Endothelial cell of umbilical vein (primary cell): ENCODE measurements at regions of chr2 and their contacts with region 1.

Region 1: GRCh38 chr2:168246483-168247340 is 683 bp downstream of the STK39 start:
- DNase-seq: peak; percentile 53
- H3K4me3 ChIP-seq: peak overlapping the region; percentile 68 to 83 (median 74)
- H3K27ac ChIP-seq: peak overlapping the region; percentile 76
- H3K4me1 ChIP-seq: peaks cover 21% of the 10 kb centered on the region
- H3K27me3 ChIP-seq: peaks cover 0 to 2% of the 10 kb centered on the region in 2 experiments
- CTCF ChIP-seq: peak in 1 of 2 donors; percentile 35
- POLR2A ChIP-seq: peak; percentile 40

Region 2: DNA sequence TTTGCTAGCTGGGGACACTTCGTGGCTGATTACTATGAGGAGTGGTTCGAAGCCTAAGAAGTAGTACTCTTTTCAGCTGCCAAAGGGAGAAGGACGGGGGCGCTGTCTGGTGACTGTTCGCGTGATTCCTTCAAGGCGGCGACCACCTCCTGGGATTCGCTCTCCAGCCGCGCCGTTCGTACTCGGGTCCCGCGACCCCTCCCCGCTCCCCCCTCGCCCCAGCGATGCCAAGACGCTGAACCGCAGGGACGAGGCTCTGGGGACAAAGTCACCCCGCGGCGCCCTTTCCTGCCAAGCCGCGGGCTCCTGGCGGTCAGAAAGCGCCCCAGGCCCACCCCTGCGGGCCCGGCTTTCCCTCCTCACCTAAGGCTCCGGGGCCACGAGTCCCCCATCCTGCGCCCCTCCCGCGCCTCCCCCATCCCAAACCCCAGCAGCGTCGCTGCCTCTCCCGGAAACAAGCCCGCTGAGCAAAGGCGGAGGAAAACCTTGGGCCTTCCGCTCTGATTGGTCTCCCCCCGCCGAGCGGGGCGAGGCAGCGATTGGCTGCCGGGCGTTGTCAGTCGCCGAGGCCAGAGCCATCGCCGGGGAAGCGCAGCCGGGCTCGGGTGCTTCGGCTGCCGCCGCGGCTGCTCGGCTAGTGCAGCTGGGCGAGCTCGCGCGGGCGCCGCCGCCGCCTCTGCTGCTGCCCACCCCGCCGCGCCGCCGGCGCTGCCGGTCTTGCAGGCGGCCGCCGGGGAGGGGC is 954.1 kb before region 1 on chr2:
- CTCF ChIA-PET with region 1: no interaction called
- POLR2A ChIA-PET with region 1: no interaction called
- dilution Hi-C with region 1: no loop called
- intact Hi-C with region 1: loop called (anchors 5 kb)
- DNase-seq: peak; percentile 87
- H3K4me3 ChIP-seq: peak within 1 kb of the TSS; percentile 50 to 82 (median 69)
- H3K27ac ChIP-seq: no peak within 1 kb of the TSS
- H3K4me1 ChIP-seq: peaks cover 19% of the 10 kb centered on the region
- H3K27me3 ChIP-seq: peaks cover 8 to 38% of the 10 kb centered on the region in 2 experiments
- CTCF ChIP-seq: peak in 1 of 2 donors; percentile 51
- POLR2A ChIP-seq: no peak

Region 3: GRCh38 chr2:168160897-168161296 is 85.8 kb before region 1 on chr2:
- CTCF ChIA-PET with region 1: interaction called, 4 read pairs
- POLR2A ChIA-PET with region 1: no interaction called
- dilution Hi-C with region 1: no loop called
- intact Hi-C with region 1: loop called (anchors 2 kb)
- DNase-seq: no peak
- H3K4me3 ChIP-seq: no peak overlapping the region
- H3K27ac ChIP-seq: no peak overlapping the region
- H3K4me1 ChIP-seq: peaks cover 10% of the 10 kb centered on the region
- H3K27me3 ChIP-seq: no peaks in the 10 kb centered on the region
- CTCF ChIP-seq: peak in 1 of 2 donors; percentile 6
- POLR2A ChIP-seq: no peak

Region 4: GRCh38 chr2:168192839-168193616 is 53.7 kb before region 1 on chr2:
- CTCF ChIA-PET with region 1: interaction called, 3 read pairs
- POLR2A ChIA-PET with region 1: no interaction called
- dilution Hi-C with region 1: no loop called
- intact Hi-C with region 1: loop called (anchors 1 kb)
- DNase-seq: peak; percentile 34
- H3K4me3 ChIP-seq: no peak overlapping the region
- H3K27ac ChIP-seq: no peak overlapping the region
- H3K4me1 ChIP-seq: peaks cover 25% of the 10 kb centered on the region
- H3K27me3 ChIP-seq: no peaks in the 10 kb centered on the region
- CTCF ChIP-seq: no peak
- POLR2A ChIP-seq: no peak

Region 5: GRCh38 chr2:168220965-168221819 is 25.5 kb before region 1 on chr2:
- CTCF ChIA-PET with region 1: no interaction called
- POLR2A ChIA-PET with region 1: no interaction called
- dilution Hi-C with region 1: no loop called
- intact Hi-C with region 1: loop called (anchors 2 kb)
- DNase-seq: peak; percentile 81
- H3K4me3 ChIP-seq: no peak overlapping the region
- H3K27ac ChIP-seq: peak overlapping the region; percentile 56
- H3K4me1 ChIP-seq: peaks cover 19% of the 10 kb centered on the region
- H3K27me3 ChIP-seq: no peaks in the 10 kb centered on the region
- CTCF ChIP-seq: no peak
- POLR2A ChIP-seq: no peak

Region 6: DNA sequence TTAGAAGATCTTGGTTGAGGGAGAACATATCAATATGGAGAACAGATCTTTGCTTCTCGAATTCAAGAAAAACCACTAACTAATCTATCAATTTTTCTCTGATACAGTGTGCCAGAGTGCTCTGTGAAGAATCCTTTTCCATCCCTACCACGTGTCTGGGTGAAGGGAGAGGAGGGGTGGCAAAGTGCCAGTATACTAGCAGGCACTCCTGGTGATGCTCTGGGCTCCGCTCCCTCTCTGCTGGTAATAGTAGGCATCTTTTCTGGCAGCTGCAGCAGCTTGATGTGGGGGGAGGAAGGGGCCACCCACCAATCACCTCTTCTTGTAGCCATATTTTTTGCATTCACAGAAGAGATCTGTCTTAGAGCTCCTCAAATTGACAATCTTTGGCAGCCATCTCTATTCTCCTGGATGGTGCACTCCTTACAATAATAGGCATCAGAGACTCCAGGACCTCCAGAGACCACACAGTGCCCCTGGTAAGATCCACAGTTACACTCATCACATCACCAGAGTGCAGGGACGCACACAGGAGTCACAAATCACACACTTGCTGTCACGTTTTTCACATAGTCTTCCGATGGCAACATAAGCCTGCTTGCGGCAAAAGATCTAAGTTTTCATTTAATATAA is 15.0 kb before region 1 on chr2:
- CTCF ChIA-PET with region 1: no interaction called
- POLR2A ChIA-PET with region 1: no interaction called
- dilution Hi-C with region 1: no loop called
- intact Hi-C with region 1: no loop called
- DNase-seq: no peak
- H3K4me3 ChIP-seq: no peak overlapping the region
- H3K27ac ChIP-seq: no peak overlapping the region
- H3K4me1 ChIP-seq: no peaks in the 10 kb centered on the region
- H3K27me3 ChIP-seq: no peaks in the 10 kb centered on the region
- CTCF ChIP-seq: no peak
- POLR2A ChIP-seq: no peak